Activated CD4-positive, alpha-beta memory T cell treated with anti-CD3 and anti-CD28 coated beads, Interleukin-2, amount 10 ng/mL, durations not matched to agents 7 days and 5 days (primary cell): ENCODE measurements at regions of chrX and their contacts with region 1.

Region 1: GRCh38 chrX:103845165-103845653 is 13.2 kb upstream of the RAB9B start:
- DNase-seq: peak; percentile 47
- H3K4me3 Mint-ChIP-seq: no peak overlapping the region
- H3K27ac Mint-ChIP-seq: no peak overlapping the region
- H3K4me1 Mint-ChIP-seq: peaks cover 2% of the 10 kb centered on the region
- H3K27me3 Mint-ChIP-seq: no peaks in the 10 kb centered on the region

Region 2: GRCh38 chrX:103831803-103832544 is 13.2 kb before region 1 on chrX and contains the start of gene RAB9B:
- CTCF ChIA-PET with region 1: interaction called, 15 read pairs
- POLR2A ChIA-PET with region 1: no interaction called
- DNase-seq: peak; percentile 60
- H3K4me3 Mint-ChIP-seq: peak within 1 kb of the TSS; percentile 76
- H3K27ac Mint-ChIP-seq: no peak within 1 kb of the TSS
- H3K4me1 Mint-ChIP-seq: peaks cover 5% of the 10 kb centered on the region
- H3K27me3 Mint-ChIP-seq: peaks cover 16% of the 10 kb centered on the region
- total RNA-seq, gene RAB9B: 0.35 to 0.45 TPM

Region 3: GRCh38 chrX:103941201-103941975 is 96.2 kb after region 1 on chrX:
- CTCF ChIA-PET with region 1: interaction called, 16 read pairs
- POLR2A ChIA-PET with region 1: no interaction called
- DNase-seq: no peak
- H3K4me3 Mint-ChIP-seq: no peak overlapping the region
- H3K27ac Mint-ChIP-seq: no peak overlapping the region
- H3K4me1 Mint-ChIP-seq: peaks cover 35% of the 10 kb centered on the region
- H3K27me3 Mint-ChIP-seq: no peaks in the 10 kb centered on the region